Mammary epithelial cell (primary cell): ENCODE measurements at regions of chr1 and their contacts with region 1.

Region 1: DNA sequence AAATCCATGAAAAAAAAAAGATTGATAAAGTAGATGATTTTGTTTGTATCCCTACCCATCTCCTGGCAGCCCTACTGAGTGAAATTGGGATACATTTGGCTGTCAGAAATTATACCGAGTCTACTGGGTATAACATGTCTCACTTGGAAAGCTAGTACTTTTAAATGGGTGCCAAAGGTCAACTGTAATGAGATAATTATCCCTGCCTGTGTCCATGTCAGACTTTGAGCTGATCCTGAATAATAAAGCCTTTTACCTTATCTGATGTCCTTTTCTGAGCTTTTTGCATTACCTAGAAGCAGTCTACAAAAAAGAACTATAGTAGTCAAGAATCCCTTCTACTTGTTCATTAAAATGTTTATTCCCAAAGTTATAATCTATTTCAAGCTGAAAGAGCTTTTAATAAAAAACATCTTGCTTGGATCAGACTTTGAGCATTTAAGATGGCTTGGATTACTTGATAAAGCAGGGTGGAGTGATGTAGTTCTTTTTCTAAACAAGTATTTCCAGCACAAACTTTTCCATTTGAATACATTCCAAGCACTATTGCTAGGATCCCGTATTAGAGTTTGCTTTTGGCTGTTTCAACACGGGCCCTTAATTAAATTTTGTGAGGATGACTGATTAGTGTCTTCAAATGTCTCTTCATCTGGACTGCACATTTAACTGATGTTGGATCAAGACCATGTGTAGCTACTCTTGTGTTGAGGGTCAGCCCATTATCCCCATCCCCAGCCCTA is 69.2 kb downstream of the DTL start:
- DNase-seq: no peak
- H3K4me3 ChIP-seq: no peak overlapping the region
- H3K27ac ChIP-seq: no peak overlapping the region
- H3K4me1 ChIP-seq: no peaks in the 10 kb centered on the region
- H3K27me3 ChIP-seq: no peaks in the 10 kb centered on the region
- CTCF ChIP-seq: no peak

Region 2: GRCh38 chr1:212167098-212167497 is 62.3 kb after region 1 on chr1:
- CTCF ChIA-PET with region 1: no interaction called
- dilution Hi-C with region 1: no loop called
- in situ Hi-C with region 1: no loop called
- intact Hi-C with region 1: loop called (anchors 5 kb)
- DNase-seq: no peak
- H3K4me3 ChIP-seq: no peak overlapping the region
- H3K27ac ChIP-seq: no peak overlapping the region
- H3K4me1 ChIP-seq: peaks cover 9% of the 10 kb centered on the region
- H3K27me3 ChIP-seq: no peaks in the 10 kb centered on the region
- CTCF ChIP-seq: no peak